ENCODE measurements at regions of chr17 and their contacts with region 1.

Region 1: DNA sequence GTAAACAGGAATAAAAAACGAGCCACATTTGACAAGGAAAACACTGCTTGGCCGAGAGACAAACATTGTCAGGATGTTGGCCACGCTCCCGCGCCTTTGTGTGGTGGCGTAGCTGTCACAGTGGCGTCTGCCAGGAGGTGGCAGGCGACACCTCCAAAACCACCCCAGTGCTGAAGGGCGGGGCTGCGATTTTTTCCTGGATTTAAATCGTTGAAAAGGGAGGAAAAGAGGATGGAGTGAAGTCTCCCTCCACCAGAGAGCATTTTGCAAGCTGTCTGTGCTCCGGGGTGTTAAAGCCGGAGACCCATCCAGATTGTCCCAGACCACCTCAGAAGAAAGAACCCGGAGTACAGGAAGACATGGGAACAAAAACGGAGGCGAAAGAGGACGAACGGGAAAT is 12.7 kb downstream of the MRM3 start:
- DNase-seq: peak in 1 of 2 donors; percentile 91
- H3K4me3 ChIP-seq: peak overlapping the region in 1 of 2 donors; percentile 19
- H3K27ac ChIP-seq: peak overlapping the region; percentile 76
- H3K4me1 ChIP-seq: peaks cover 35% of the 10 kb centered on the region
- H3K27me3 ChIP-seq: no peaks in the 10 kb centered on the region
- CTCF ChIP-seq: peak; percentile 65 to 93 (median 68)
- POLR2A ChIP-seq: no peak

Region 2: GRCh38 chr17:652314-652713 is 142.6 kb before region 1 on chr17:
- intact Hi-C with region 1: no loop called
- DNase-seq: peak in 1 of 2 donors; percentile 92
- H3K4me3 ChIP-seq: no peak overlapping the region
- H3K27ac ChIP-seq: no peak overlapping the region
- H3K4me1 ChIP-seq: no peaks in the 10 kb centered on the region
- H3K27me3 ChIP-seq: no peaks in the 10 kb centered on the region
- CTCF ChIP-seq: no peak
- POLR2A ChIP-seq: no peak

Region 3: DNA sequence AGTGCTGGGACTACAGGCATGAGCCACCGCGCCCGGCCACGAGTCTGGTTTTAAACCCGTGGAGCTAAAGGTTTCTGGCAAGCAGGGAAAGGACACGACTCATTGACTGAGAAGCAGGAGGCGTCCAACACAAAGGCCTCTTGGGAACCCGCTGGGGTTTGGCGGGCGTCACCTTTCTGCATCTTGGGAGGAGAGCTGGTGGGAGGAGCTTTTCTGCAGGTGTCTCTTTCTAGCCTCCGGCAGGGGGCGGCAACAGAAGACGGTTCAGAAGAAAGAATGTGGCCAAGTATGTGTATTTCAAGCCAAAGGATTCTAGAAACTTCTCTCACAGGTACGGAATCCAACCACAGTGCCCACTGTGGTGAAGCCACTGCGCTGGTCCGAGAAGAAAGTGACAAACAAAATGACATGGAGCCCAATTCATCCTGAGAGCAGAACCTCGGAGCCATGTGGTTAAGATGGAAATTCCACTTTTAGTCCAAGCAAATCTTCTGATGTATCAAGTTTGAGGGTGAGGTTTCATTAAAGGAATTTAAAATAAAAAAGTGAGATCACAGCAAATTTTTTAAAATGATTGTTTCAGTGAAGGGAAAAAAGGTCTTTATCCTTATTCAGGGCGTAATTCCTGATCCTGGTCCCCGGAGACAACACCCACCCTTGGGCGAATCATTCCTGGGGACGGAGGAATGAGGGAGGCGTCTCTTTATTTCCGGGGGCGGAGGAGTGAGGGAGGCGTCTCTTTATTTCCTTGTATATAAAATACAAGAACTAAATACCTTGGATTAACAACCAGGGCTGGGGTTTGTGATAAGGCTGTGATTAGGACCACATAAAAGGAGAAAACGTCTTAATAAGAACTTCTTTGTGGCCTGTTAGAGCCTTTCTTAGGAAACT is 84.9 kb after region 1 on chr17:
- intact Hi-C with region 1: loop called (anchors 10 kb)
- DNase-seq: no peak
- H3K4me3 ChIP-seq: no peak overlapping the region
- H3K27ac ChIP-seq: peak overlapping the region; percentile 80
- H3K4me1 ChIP-seq: peaks cover 60% of the 10 kb centered on the region
- H3K27me3 ChIP-seq: no peaks in the 10 kb centered on the region
- CTCF ChIP-seq: peak; percentile 21 to 60 (median 34)
- POLR2A ChIP-seq: no peak

Region 4: DNA sequence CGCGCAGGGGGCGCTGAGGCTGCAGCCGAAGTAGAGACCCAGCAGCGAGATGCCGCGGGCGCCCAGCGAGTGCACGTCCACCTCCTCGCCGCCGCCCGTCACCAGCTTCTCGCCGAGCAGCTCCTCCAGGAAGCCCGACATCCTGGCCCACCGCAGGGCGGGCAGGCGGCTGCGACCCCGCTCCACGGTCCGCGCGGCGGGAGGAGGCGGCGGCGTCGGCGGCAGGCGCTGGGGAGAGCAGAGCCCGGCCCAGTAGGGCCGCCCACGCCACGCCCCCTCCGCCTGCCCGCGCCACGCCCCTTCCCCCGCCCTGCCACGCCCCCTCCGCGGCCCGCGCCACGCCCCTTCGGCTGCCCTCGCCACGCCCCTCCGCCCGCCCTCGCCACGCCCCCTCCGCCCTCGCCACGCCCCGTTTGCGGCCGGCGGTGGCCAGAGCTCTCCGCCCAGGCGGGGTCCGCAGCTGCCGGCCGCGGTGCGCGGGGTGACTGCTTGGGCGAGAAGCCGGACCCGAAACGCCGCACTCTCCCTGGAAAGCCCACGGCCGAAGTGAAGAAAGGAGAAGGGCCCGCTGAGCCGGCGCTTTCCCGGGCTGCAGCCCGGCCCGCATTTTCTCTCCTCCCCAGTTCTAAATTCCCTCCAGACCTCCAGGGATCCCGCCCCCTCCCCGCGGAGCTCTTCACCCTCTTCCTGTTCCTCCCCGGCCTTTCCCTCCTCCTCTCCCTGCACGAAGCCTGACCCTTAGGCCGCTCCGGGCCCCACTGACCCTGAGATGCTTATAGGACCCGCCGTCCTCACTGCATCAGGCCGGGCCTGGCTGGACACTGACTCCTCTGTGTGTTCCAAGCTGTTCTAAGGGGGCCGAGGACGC is 184.9 kb after region 1 on chr17 and contains the start of gene NXN:
- intact Hi-C with region 1: loop called (anchors 2 kb)
- DNase-seq: no peak
- H3K4me3 ChIP-seq: peak within 1 kb of the TSS; percentile 93
- H3K27ac ChIP-seq: peak within 1 kb of the TSS; percentile 93
- H3K4me1 ChIP-seq: peaks cover 43% of the 10 kb centered on the region
- H3K27me3 ChIP-seq: no peaks in the 10 kb centered on the region
- CTCF ChIP-seq: no peak
- POLR2A ChIP-seq: peak; percentile 18 to 71
- total RNA-seq, gene NXN: 51.6 TPM

Region 5: DNA sequence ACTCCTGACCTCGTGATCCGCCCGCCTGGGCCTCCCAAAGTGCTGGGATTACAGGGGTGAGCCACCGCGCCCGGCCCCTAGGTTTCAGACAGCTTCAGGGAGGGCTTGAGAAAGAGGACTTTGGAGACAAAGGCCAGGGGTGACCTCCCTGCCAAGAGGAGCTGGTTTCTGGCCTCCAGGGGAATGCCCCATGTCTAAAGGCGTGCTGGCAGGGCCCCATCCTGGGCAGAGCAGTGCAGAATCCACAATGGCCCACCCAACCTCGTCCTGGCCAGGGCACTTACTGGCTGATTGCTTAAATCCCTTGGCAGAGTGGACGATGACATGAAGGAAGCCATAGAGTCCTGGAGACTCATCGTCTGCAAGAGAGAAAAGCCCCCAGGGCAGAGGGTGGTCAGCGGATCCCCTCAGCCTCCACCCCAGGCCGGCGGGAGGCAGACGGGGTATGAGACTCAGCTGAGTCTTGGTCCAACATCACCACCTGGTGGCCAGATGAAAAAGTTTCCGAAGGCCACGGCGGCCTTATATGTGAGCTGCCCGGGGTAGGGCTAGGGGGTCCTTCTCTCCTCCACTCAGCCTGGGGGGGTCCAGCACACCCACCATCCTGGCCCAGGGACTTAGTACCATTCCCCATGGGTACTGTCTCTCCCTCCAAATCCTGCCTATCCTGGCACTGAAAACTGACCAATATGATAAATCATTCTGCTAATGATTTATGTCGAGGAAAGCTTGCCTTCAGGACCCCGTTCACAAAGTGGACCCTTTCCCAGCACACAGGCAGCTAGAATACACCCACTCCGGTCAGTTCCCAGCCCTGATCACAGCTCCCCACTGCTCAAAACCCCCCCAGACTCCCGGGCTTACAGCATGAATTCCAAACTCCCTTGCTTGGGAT is 261.1 kb after region 1 on chr17:
- intact Hi-C with region 1: loop called (anchors 10 kb)
- DNase-seq: no peak
- H3K4me3 ChIP-seq: no peak overlapping the region
- H3K27ac ChIP-seq: peak overlapping the region; percentile 27
- H3K4me1 ChIP-seq: peaks cover 1% of the 10 kb centered on the region
- H3K27me3 ChIP-seq: no peaks in the 10 kb centered on the region
- CTCF ChIP-seq: peak; percentile 42 to 66 (median 52)
- POLR2A ChIP-seq: no peak